ENCODE measurements at regions of chr15 and their contacts with region 1.

Region 1: GRCh38 chr15:36970522-36970921 is 129.8 kb downstream of the MEIS2 start:
- DNase-seq: no peak
- ATAC-seq: no peak
- H3K4me3 ChIP-seq: no peak overlapping the region
- H3K27ac ChIP-seq: no peak overlapping the region
- H3K4me1 ChIP-seq: no peaks in the 10 kb centered on the region
- H3K27me3 ChIP-seq: no peaks in the 10 kb centered on the region

Region 2: DNA sequence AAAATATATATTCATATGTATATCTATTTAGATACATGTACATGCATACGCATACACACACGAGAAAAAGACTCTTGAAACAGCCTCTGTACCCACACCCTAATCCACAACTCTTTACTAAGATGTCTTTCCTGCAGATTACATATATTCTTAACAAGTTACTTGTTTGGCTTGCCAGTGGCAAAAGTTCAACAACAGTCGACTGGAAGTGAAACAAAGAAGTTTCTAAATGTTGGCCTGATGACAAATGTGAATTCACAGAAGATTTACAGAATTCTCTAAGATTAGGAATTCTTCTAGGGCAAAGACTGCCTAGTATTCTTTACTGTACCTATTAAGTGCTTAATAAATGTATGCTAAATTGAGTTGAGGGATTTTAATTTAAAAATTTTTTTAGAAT is 274.3 kb before region 1 on chr15:
- intact Hi-C with region 1: no loop called
- DNase-seq: no peak
- ATAC-seq: no peak
- H3K4me3 ChIP-seq: no peak overlapping the region
- H3K27ac ChIP-seq: no peak overlapping the region
- H3K4me1 ChIP-seq: no peaks in the 10 kb centered on the region
- H3K27me3 ChIP-seq: no peaks in the 10 kb centered on the region

Region 3: DNA sequence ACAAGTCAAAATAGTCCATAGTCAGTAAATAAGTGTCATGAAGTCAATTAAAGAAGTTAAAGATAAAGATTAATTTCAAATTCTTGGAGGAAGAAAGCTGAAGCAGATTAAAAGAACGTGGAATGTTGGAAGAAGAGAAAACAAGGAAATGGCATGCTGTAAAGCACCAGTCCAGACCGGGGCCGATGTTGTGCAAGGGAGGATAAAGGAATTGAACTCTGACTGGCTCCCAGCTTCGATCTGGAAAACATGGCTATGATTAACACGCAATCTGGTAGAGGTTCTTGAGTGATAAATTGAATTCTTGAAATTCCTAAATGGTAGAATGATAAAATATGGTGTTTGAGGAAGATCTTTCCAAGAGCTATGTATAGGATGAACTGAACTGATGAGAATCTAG is 64.6 kb before region 1 on chr15:
- intact Hi-C with region 1: loop called in 1 of 2 experiments (anchors 2 kb)
- DNase-seq: no peak
- ATAC-seq: peak; percentile 56
- H3K4me3 ChIP-seq: no peak overlapping the region
- H3K27ac ChIP-seq: no peak overlapping the region
- H3K4me1 ChIP-seq: peaks cover 0 to 3% of the 10 kb centered on the region in 2 donors
- H3K27me3 ChIP-seq: no peaks in the 10 kb centered on the region

Measured in aorta (tissue), 5 donors.